OCI-LY7 (cell line): ENCODE measurements at regions of chr17 and their contacts with region 1.

Region 1: GRCh38 chr17:44218344-44219107 is 949 bp downstream of the UBTF start:
- DNase-seq: peak; percentile 94
- H3K4me3 ChIP-seq: peak overlapping the region; percentile 90
- H3K27ac ChIP-seq: peak overlapping the region; percentile 86
- H3K4me1 ChIP-seq: peaks cover 36% of the 10 kb centered on the region
- CTCF ChIP-seq: peak; percentile 80

Region 2: GRCh38 chr17:44199553-44200477 is 18.7 kb before region 1 on chr17 and contains the start of gene ATXN7L3:
- CTCF ChIA-PET with region 1: interaction called, 4 read pairs
- POLR2A ChIA-PET with region 1: interaction called, 11 read pairs
- intact Hi-C with region 1: loop called (anchors 1 kb)
- DNase-seq: peak; percentile 99
- H3K4me3 ChIP-seq: peak within 1 kb of the TSS; percentile 85
- H3K27ac ChIP-seq: peak within 1 kb of the TSS; percentile 96
- H3K4me1 ChIP-seq: peaks cover 52% of the 10 kb centered on the region
- CTCF ChIP-seq: no peak
- total RNA-seq, gene ATXN7L3: 57.7 and 66.5 TPM in 2 replicates

Region 3: GRCh38 chr17:44503147-44504029 is 284.9 kb after region 1 on chr17 and contains the start of gene GPATCH8:
- CTCF ChIA-PET with region 1: no interaction called
- POLR2A ChIA-PET with region 1: no interaction called
- intact Hi-C with region 1: loop called (anchors 10 kb)
- DNase-seq: peak; percentile 95
- H3K4me3 ChIP-seq: peak within 1 kb of the TSS; percentile 92
- H3K27ac ChIP-seq: peak within 1 kb of the TSS; percentile 83
- H3K4me1 ChIP-seq: peaks cover 33% of the 10 kb centered on the region
- CTCF ChIP-seq: no peak
- total RNA-seq, gene GPATCH8: 24.5 and 24.7 TPM in 2 replicates